ENCODE measurements at regions of chr14 and their contacts with region 1.

Region 1: GRCh38 chr14:92456215-92457015 is 57.2 kb upstream of the RIN3 start:
- ATAC-seq: peak; percentile 49 to 88 (median 68)
- H3K4me3 ChIP-seq: no peak overlapping the region
- H3K27ac ChIP-seq: no peak overlapping the region
- H3K4me1 ChIP-seq: peaks cover 0 to 12% of the 10 kb centered on the region in 2 donors

Region 2: DNA sequence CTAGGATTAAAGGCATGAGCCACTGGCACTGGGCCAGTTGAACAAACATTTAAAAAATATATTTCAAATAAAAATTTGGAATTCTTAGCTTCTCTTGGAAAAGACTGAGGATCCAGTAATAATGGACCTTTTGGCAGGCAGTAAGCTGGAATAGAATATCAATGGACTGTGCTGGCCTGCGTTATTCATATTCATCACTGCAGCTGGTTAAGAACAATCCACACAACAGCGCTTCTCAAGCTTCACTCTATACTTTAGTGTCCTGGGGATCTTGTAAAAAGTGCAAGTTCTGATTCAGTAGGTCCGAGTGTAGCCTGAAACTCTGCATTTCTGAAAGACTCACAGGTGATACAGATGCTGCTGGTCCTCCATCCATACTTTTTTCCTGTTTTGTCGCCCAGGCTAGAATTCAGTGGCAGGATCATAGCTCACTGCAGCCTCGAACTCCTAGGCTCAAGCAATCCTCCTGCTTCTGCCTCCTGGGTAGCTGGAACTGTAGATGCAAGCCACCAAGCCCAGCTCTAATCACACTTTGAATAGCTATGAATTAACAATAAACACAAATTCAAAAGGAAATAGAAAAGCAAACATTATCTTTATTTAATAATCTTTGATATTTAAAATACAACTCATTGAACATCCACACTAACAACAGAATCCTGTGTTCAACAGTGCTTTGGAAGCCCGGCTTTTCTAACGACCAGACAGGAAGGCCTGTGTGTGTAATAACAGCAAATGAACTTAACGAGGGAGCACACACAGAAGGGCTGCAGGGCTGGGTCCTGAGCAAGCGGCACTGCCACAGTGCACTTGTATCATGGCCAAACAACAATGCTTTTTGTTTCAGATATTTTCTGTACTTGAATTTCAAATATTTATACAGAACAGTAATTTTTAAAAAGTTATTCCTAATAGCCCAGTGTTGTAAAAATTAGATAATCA is 398.2 kb before region 1 on chr14:
- in situ Hi-C with region 1: no loop called
- ATAC-seq: peak in 2 of 8 experiments; percentile 32 to 47
- H3K4me3 ChIP-seq: no peak overlapping the region
- H3K27ac ChIP-seq: no peak overlapping the region
- H3K4me1 ChIP-seq: no peaks in the 10 kb centered on the region

Region 3: DNA sequence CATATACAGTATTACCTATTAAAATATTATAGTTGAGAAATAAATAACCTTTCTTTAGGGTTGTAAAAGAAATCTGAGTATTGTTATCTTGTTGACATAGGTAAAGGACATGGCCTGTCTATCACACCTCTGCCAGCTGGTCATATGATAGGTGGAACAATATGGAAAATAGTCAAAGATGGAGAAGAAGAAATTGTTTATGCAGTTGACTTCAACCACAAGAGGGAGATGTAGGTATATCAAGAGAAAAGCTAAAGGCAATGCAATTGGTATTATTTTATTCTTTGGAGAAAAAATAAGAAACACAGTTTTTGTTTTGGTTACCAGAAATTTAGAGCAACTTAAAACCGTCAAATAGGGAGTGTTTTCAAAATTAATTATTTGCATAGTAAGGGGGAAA is 321.1 kb before region 1 on chr14:
- in situ Hi-C with region 1: loop called in 1 of 9 experiments (anchors 25 kb)
- ATAC-seq: peak in 3 of 8 experiments; percentile 46 to 80 (median 54)
- H3K4me3 ChIP-seq: no peak overlapping the region
- H3K27ac ChIP-seq: no peak overlapping the region
- H3K4me1 ChIP-seq: no peaks in the 10 kb centered on the region

Region 4: DNA sequence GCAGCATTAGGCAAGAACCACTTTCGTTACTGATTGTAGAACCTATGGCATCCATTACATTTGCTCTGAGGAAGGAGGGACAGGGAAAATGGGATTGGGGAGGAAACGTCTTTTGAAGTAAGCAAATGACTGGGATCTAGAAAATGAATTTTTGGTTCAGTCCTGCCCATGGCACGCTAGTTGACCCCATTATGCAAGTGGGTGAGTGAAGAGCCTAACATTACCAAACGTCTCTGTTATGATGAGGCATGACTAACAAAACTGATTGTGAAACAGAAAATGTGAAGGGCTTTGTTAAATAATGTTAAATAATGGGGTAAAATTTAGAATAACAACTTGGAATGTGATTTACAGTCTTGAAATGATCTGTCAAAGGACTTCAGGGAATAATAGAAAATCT is 295.8 kb before region 1 on chr14:
- in situ Hi-C with region 1: loop called in 1 of 9 experiments (anchors 25 kb)
- ATAC-seq: peak in 2 of 8 experiments; percentile 98 to 99
- H3K4me3 ChIP-seq: no peak overlapping the region
- H3K27ac ChIP-seq: no peak overlapping the region
- H3K4me1 ChIP-seq: peaks cover 0 to 3% of the 10 kb centered on the region in 2 donors